ENCODE measurements at regions of chr15 and their contacts with region 1.

Region 1: DNA sequence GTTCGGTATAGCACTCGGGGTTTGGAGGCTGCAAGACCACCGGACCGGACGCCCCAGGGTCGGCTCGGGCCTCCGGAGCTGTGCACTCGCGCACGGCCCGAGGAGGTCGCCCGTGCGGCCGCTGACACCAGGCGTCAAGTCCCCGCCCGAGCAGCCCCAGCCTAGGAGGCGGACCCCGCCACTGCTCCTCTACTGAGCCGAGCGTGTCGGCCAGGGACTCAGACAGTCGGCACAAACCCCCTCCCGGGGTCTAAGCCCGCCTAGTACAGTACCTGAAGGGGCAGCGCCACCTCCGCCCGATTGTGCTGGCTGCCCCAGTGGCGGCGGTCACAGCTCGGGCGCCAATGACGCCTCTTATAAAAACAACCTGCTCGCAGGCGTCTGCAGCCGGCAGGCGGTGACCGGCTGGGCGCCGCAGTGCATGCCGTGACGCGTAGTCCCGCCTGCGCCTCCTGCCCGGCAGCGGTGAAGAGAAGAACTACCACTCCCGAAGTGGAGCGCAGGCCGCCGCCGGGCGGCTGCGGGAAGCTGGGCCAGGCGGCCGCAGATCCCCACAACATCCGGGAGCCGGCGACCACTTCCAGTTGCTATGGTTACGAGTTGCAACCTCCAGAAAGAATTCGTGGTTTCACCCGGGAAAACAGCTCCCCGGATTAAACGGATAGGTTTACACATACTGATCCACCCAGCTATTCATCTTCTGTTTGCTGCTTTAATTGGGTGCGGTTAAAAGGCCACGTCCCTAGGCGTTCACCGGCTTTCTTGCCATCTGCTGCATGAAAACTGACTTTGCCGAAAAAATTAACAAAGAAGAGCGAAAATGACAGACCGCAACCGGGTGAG is at the starts of genes CCPG1 and PIERCE2:
- DNase-seq: peak; percentile 91
- ATAC-seq: peak; percentile 98 to 99 (median 99)
- H3K4me3 ChIP-seq: peak within 1 kb of the TSS; percentile 72 to 96 (median 80)
- H3K27ac ChIP-seq: peak within 1 kb of the TSS; percentile 26 to 98 (median 92)
- H3K4me1 ChIP-seq: peaks cover 0 to 53% (median 35%) of the 10 kb centered on the region in 9 donors
- H3K27me3 ChIP-seq: no peaks in the 10 kb centered on the region
- CTCF ChIP-seq: peak; percentile 57 to 94 (median 85)
- total RNA-seq, gene CCPG1: 71.2 to 106 (median 88.2) TPM
- total RNA-seq, gene PIERCE2: 3.0 to 10.1 (median 4.7) TPM

Region 2: DNA sequence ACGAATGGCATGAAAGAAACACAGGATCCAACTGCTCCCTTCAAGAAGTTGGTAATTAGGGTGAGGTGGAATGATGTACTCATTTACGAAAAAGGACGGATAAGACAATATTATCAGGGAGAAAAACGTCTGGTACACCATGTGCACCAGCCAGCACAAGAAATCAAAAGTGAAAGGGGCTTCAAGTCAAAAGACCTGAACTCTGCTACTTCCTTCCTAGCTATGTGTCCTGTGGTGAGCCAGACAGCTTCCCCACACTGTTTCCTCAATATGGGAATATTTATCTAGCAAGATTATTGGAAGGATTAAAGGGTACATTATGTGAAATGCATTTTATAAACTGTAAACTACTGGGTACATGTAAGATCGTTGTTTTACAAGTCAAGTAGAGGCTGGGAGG is 152.5 kb before region 1 on chr15:
- intact Hi-C with region 1: no loop called
- DNase-seq: no peak
- ATAC-seq: peak in 5 of 8 donors; percentile 25 to 76 (median 72)
- H3K4me3 ChIP-seq: peak overlapping the region in 6 of 10 donors; percentile 5 to 40 (median 34)
- H3K27ac ChIP-seq: peak overlapping the region in 4 of 10 donors; percentile 36 to 73 (median 60)
- H3K4me1 ChIP-seq: peaks cover 0 to 72% (median 0%) of the 10 kb centered on the region in 9 donors
- H3K27me3 ChIP-seq: no peaks in the 10 kb centered on the region
- CTCF ChIP-seq: no peak

Region 3: GRCh38 chr15:55318588-55319494 is 89.3 kb before region 1 on chr15 and contains the starts of genes PIGB and PIGBOS1:
- intact Hi-C with region 1: loop called in 2 of 10 experiments (anchors 5 to 10 kb)
- DNase-seq: peak; percentile 80 to 88
- ATAC-seq: peak; percentile 97 to 99 (median 98)
- H3K4me3 ChIP-seq: peak within 1 kb of the TSS; percentile 60 to 92 (median 84)
- H3K27ac ChIP-seq: peak within 1 kb of the TSS; percentile 23 to 98 (median 88)
- H3K4me1 ChIP-seq: peaks cover 0 to 37% (median 29%) of the 10 kb centered on the region in 9 donors
- H3K27me3 ChIP-seq: no peaks in the 10 kb centered on the region
- CTCF ChIP-seq: peak in 2 of 9 donors; percentile 16 to 24
- total RNA-seq, gene PIGB: 1.4 to 4.3 (median 3.1) TPM
- total RNA-seq, gene PIGBOS1: 3.3 to 8.7 (median 7.4) TPM

Region 4: DNA sequence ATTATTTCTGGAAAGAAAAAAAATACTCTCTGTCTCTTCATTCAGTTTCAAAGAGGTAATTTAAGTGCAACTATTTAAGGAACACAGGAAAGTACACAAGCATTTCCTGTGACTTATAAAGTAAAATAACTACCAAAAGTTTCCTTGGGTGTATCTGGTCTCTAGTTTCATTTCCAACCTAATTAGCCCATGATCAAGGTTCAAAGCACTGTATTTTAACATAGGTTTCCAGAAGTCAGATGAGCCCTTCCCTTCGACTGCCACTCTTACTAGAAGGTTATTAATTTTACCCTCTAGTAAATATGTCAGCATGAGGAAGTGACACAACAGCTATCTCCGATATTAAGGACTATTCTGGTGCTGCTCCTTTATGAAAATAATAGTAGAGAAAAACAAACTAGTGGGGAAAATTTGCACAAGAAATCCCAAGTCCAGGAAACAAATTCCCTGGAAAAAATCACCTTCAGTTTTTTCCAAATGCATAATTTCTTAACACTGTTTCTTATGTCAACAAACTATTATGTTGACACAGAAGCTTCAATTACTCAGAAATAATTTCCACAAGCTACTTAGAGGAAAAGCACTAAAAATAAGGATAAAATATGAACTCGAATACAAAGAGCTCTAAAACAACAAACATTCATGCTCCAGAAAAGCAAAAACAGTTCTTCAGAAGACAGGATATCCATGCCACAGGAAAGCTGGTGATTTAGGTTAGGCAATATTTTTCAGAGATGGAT is 35.3 kb before region 1 on chr15:
- intact Hi-C with region 1: loop called in 1 of 10 experiments (anchors 5 kb)
- DNase-seq: no peak
- ATAC-seq: peak in 2 of 8 donors; percentile 53 to 64
- H3K4me3 ChIP-seq: peak overlapping the region in 2 of 10 donors; percentile 1 to 5
- H3K27ac ChIP-seq: peak overlapping the region in 9 of 10 donors; percentile 26 to 69 (median 56)
- H3K4me1 ChIP-seq: peaks cover 0 to 24% (median 7%) of the 10 kb centered on the region in 9 donors
- H3K27me3 ChIP-seq: no peaks in the 10 kb centered on the region
- CTCF ChIP-seq: no peak

Region 5: DNA sequence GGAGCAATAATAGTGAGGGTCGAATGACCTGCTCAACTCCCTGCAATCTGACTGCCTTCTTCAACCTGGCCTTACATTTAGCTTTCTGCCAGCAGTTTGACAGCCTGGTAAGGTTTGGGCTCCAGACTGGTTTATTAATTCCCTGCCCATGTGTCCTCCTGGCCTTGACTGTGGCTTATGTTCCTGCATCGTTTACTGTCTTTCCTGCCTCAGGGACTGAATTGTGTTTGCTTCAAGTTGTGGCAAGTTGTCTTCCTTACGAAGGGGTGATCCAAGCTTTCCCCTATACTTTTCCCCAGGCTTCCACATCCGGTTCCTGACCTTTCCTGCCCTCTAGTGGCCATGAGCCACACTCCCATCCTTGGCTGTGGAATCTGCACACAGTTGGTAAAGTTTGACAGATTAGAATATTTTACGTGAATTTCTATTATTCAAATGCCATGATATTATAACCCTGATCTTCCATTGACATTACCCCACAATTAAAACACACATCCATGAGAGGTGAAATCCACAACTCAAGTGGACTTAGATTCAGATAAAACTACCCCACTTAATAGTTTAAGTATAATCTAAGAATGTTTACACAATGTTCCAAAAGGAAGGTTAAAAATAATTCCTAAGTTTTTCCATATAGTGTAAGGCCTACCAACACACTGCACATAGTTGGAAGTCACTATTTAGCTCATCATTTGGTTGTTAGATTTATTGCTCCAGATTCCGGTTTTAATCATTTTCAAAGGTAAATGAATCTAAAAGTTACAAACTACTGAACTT is 489.6 kb after region 1 on chr15:
- intact Hi-C with region 1: no loop called
- DNase-seq: peak; percentile 29 to 54
- ATAC-seq: peak; percentile 72 to 97 (median 87)
- H3K4me3 ChIP-seq: peak overlapping the region in 4 of 10 donors; percentile 5 to 12 (median 11)
- H3K27ac ChIP-seq: peak overlapping the region in 9 of 10 donors; percentile 25 to 87 (median 74)
- H3K4me1 ChIP-seq: peaks cover 0 to 38% (median 15%) of the 10 kb centered on the region in 9 donors
- H3K27me3 ChIP-seq: no peaks in the 10 kb centered on the region
- CTCF ChIP-seq: peak; percentile 67 to 90 (median 84)

Measured in heart right ventricle (tissue), 16 donors.